ENCODE measurements at regions of chr22 and their contacts with region 1.

Region 1: GRCh38 chr22:31399211-31400028 is at the start of gene DRG1:
- DNase-seq: peak; percentile 92
- H3K4me3 Mint-ChIP-seq: peak within 1 kb of the TSS; percentile 84
- H3K27ac Mint-ChIP-seq: peak within 1 kb of the TSS; percentile 94
- H3K4me1 Mint-ChIP-seq: no peaks in the 10 kb centered on the region
- H3K27me3 Mint-ChIP-seq: no peaks in the 10 kb centered on the region
- CTCF ChIP-seq: no peak
- total RNA-seq, gene DRG1: 84.8 and 101 TPM in 2 replicates

Region 2: GRCh38 chr22:31337161-31337560 is 62.3 kb before region 1 on chr22:
- CTCF ChIA-PET with region 1: interaction called, 3 read pairs
- POLR2A ChIA-PET with region 1: interaction called, 10 read pairs
- intact Hi-C with region 1: no loop called
- DNase-seq: peak; percentile 61
- H3K4me3 Mint-ChIP-seq: no peak overlapping the region
- H3K27ac Mint-ChIP-seq: no peak overlapping the region
- H3K4me1 Mint-ChIP-seq: peaks cover 8% of the 10 kb centered on the region
- H3K27me3 Mint-ChIP-seq: no peaks in the 10 kb centered on the region
- CTCF ChIP-seq: no peak

Region 3: DNA sequence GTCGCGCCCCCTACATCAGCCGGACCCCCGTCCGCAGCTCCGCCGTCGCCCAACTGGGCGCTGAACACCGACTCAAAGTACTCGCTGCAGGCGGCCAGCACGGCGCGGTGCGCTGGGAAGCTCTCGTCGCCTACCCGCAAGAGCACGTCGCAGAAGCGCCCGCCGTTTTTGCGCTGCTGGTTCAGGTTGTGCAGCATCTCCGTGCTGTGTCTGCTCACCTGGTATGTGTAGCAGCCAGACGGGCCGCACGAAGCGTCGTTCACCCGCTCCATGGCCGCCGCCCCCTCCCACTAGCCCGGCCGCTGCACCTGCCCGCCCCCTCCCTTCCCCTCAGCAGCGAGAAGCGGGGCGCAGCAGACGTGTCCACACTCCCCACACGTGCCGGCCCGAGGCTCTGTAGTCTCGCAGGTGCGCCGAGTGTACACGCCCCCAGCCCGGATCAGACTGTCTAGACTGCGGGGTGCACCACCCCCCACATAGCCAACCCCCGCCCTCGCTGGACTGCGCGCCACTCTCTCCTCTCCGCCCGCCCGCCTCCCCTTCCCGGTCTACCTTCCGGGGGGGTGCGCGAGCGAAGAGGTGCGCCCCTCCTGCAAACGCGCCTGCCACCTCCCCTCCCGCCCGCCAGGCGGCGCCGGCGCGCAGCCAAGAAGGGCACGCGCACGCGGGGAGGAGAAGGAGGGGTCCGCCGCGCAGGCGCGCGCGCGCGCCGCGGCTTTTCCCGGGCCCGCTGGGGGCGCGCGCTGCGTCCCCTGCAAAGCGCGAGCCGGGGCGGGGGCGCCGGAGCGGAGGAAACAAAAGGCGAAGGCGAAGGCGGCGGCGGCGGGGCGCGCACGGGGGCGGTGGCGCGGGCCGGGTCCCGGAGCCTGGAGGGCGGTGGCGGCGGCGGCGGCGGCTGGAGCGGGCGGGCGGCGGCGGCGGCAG is 53.8 kb before region 1 on chr22:
- CTCF ChIA-PET with region 1: interaction called, 4 read pairs
- POLR2A ChIA-PET with region 1: interaction called, 61 read pairs
- intact Hi-C with region 1: loop called (anchors 1 kb)
- DNase-seq: peak; percentile 83
- H3K4me3 Mint-ChIP-seq: peak overlapping the region; percentile 76
- H3K27ac Mint-ChIP-seq: no peak overlapping the region
- H3K4me1 Mint-ChIP-seq: peaks cover 18% of the 10 kb centered on the region
- H3K27me3 Mint-ChIP-seq: no peaks in the 10 kb centered on the region
- CTCF ChIP-seq: peak; percentile 78

Region 4: DNA sequence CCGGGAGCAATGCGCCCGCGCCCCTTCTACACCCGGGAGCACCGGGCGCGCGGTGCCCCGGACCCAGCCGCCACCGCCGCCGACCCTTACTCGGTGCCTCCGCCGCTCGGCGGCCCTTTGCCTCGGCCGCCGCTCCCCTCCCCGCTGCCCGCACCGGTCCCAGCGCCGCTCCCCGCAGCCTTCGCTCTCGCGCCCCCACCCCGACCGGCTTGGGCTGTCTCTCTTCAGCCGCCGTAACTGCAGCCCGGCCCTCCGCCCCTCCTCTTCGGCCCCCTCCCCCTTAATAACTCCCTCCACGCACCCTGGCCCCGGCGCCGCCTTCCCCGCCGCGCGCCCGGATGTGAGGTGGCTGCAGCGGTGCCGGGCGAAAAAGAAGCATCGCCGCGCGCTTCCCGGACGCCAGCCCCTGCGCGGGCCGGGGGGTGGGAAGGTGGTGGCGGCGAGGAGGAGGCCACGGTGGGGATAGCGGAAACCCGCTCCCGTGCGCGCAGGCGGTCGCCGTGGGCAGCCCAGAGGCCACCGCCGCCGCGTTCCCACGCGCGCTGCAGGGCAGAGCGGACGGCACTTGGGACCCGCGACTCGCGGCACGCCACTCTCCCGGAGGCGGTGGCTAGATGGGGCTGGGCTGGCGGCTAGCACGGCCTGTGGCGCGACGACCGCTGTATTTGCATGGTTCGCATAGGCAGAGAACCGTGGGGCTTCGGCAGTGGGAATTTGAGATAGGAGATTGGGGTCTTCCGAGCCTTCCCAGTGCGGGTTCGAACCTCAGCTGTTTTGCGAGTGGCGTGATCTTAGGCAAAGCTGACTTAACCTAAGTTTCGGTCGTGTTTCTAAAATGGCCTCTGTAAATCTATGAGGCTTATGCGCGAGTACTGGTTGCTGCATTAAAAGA is 90.4 kb after region 1 on chr22 and contains the start of gene EIF4ENIF1:
- CTCF ChIA-PET with region 1: no interaction called
- POLR2A ChIA-PET with region 1: interaction called, 12 read pairs
- intact Hi-C with region 1: no loop called
- DNase-seq: peak; percentile 84
- H3K4me3 Mint-ChIP-seq: peak within 1 kb of the TSS; percentile 88
- H3K27ac Mint-ChIP-seq: peak within 1 kb of the TSS; percentile 84
- H3K4me1 Mint-ChIP-seq: peaks cover 8% of the 10 kb centered on the region
- H3K27me3 Mint-ChIP-seq: no peaks in the 10 kb centered on the region
- CTCF ChIP-seq: no peak
- total RNA-seq, gene EIF4ENIF1: 25.6 and 31.1 TPM in 2 replicates

Region 5: DNA sequence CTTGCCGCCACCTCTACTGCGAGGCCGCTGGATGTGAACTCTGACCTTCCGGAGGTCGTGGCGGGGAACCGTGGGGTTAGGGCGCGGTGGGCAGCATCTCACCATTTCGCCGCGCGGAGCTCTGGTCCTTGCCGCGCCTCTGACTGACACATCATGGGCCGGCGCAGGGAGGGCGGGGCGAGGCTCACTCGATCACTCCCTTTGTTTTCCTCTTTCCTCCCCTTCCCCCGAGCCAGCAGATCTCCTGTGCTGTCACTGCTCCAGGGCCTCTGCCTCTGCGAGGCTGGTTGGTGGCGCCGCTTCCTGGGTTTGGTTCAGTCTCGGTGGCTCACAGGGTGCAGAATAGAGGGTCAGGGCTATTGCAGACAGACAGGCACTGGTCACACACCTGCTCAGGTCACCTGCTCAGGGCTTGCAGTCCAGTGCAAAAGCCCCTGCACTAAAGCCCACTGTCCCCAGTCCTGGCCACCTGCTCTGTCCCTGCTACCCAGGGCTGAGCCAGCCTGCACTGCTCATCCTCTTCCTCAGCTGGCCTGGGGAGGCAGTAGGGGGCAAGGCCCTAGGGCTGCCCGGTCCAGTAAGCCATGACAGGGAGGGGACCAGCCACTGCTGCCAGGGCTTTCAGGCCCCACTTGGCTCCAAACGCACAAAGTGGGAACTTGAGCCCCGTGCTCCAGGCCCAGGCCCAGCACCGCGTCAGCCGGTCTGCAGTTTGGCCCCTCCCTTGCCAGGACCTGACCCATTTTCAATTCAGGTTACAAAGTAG is 226.4 kb after region 1 on chr22:
- CTCF ChIA-PET with region 1: no interaction called
- POLR2A ChIA-PET with region 1: no interaction called
- intact Hi-C with region 1: no loop called
- DNase-seq: no peak
- H3K4me3 Mint-ChIP-seq: no peak overlapping the region
- H3K27ac Mint-ChIP-seq: no peak overlapping the region
- H3K4me1 Mint-ChIP-seq: peaks cover 12% of the 10 kb centered on the region
- H3K27me3 Mint-ChIP-seq: no peaks in the 10 kb centered on the region
- CTCF ChIP-seq: no peak

Measured in MCF 10A (cell line).